BJ (cell line): ENCODE measurements at regions of chr5 and their contacts with region 1.

Region 1: GRCh38 chr5:169788166-169788565 is 151.1 kb downstream of the DOCK2 start:
- DNase-seq: no peak
- H3K4me3 ChIP-seq: no peak overlapping the region
- H3K27me3 ChIP-seq: no peaks in the 10 kb centered on the region
- CTCF ChIP-seq: no peak

Region 2: GRCh38 chr5:169650701-169651331 is 137.3 kb before region 1 on chr5:
- CTCF ChIA-PET with region 1: no interaction called
- POLR2A ChIA-PET with region 1: no interaction called
- DNase-seq: no peak
- H3K4me3 ChIP-seq: no peak overlapping the region
- H3K27me3 ChIP-seq: no peaks in the 10 kb centered on the region
- CTCF ChIP-seq: no peak

Region 3: DNA sequence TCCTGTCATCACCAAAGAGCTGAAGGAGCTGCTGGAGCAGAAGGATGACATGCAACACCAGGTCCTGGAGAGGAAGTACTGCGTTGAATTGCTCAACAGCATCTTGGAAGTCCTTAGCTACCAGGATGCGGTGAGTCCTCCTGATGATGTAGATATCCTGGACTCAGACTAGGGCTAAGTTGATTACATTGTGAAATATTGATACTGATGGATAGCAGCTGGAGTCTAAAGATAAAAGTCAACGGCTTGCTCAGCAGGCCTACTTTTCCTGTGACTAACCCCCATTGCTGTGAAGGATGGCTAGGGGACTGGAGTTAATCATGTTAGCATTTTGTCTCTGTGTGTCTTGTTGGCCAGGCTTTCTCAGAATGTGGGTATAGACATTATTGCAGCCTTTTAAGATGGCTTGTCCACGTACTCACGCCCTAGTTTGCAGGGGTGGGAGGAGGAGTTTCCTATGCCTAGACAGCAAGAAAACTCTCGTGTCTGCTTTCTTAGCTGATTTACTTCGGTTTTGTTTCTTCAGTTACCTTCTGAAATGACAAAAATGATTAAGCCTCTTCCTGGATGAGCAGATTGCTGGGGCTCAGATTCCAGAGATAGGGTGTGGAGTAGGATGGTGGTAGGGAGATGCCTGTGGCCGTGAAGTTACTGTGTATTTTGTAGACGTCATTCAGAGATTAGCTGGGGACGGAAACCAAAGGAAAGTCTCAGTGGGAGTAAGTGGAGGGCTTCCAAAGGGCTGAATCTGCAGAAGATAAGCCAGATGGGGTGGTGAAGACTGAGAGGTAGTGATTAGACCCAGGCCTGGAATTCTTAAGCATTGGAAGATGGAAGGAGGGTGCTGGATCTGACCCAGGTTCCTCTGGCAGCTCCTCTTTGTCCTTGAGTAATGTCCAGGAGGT is 15.2 kb after region 1 on chr5:
- CTCF ChIA-PET with region 1: interaction called, 3 read pairs
- POLR2A ChIA-PET with region 1: interaction called, 18 read pairs
- DNase-seq: peak; percentile 89
- H3K4me3 ChIP-seq: 0 out of 2 replicates have a peak overlapping the region, but pooled peaks have one; percentile 4
- H3K27me3 ChIP-seq: no peaks in the 10 kb centered on the region
- CTCF ChIP-seq: no peak